SK-N-SH (cell line): ENCODE measurements at regions of chr2 and their contacts with region 1.

Region 1: DNA sequence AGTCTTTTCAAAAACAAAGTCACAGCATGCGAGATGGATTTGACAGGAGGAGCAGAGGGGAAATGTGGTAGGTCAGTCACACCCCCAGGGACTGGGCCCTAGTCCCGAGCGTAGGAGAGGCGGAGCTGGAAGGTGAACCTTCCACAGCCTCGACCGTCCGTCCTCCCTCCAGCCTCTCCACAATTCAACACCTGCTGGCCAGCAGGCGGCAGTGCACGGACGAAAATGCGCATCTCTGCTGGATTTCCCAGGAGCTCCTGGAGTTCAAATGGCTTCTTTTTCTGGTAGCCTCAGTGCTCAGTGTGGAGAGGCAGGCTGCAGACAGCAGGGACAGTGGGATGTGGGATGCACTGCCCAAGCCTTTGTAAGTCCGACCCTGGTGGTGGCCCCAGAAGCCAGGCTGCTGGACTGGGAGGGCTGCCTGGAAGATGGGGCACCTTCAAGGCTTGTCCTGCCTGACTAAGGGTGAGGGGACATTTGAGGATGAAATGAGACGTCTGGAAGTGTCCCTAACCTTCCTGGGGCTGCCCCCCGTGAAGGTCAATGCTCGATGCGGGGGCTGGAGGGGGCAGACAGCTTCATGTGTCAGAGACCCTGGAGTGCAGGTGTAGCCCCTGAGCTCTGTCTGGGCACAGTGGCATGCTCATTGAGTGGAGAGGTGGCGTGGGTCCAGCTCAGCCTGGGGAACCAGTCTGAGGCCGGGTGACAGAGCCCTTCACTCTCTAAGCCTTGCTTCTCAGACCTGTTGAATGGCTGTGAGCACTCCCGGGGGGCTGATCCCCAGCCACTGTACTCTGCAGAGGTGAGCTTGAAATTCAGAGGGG is 189.5 kb downstream of the TFCP2L1 start:
- DNase-seq: peak; percentile 85
- H3K4me3 ChIP-seq: no peak overlapping the region
- H3K27ac ChIP-seq: no peak overlapping the region
- H3K4me1 ChIP-seq: peaks cover 0 to 8% of the 10 kb centered on the region in 2 experiments; a peak in 2 of 4 replicates
- H3K27me3 ChIP-seq: peaks cover 15% of the 10 kb centered on the region
- CTCF ChIP-seq: peak; percentile 67
- EP300 ChIP-seq: no peak
- RAD21 ChIP-seq: peak; percentile 84

Region 2: DNA sequence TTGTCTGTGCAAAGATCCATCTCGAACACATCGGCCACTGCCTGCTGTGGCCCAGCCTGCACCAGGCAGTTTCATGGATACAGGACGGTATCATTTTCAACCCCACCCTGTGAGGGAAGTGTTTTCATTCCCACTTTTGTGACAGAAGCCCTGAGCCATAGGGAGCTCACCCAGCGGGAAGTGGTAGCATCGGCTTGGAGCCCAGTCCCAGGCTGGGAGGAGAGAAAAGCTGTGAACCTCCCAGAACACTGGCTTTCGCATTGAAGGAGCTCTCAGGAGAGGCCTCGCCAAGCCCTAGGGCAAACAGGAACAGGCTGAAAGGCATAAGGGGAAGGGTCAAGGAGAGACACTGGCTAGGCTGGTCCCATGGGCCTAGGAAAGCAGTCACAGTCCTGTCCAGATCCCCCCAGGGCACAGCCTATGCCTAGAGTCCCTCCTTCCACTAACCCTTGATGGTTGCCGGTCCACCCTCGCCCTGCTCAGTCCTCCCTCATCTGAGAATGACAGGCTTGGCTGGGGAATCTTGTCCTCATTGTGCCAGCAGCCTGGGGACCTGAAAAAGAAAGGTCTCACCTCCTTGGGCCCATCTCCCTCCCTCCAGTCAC is 23.6 kb after region 1 on chr2:
- CTCF ChIA-PET with region 1: interaction called, 11 read pairs
- POLR2A ChIA-PET with region 1: no interaction called
- DNase-seq: no peak
- H3K4me3 ChIP-seq: no peak overlapping the region
- H3K27ac ChIP-seq: no peak overlapping the region
- H3K4me1 ChIP-seq: no peaks in the 10 kb centered on the region
- H3K27me3 ChIP-seq: peaks cover 16% of the 10 kb centered on the region
- CTCF ChIP-seq: no peak
- EP300 ChIP-seq: no peak
- RAD21 ChIP-seq: no peak

Region 3: DNA sequence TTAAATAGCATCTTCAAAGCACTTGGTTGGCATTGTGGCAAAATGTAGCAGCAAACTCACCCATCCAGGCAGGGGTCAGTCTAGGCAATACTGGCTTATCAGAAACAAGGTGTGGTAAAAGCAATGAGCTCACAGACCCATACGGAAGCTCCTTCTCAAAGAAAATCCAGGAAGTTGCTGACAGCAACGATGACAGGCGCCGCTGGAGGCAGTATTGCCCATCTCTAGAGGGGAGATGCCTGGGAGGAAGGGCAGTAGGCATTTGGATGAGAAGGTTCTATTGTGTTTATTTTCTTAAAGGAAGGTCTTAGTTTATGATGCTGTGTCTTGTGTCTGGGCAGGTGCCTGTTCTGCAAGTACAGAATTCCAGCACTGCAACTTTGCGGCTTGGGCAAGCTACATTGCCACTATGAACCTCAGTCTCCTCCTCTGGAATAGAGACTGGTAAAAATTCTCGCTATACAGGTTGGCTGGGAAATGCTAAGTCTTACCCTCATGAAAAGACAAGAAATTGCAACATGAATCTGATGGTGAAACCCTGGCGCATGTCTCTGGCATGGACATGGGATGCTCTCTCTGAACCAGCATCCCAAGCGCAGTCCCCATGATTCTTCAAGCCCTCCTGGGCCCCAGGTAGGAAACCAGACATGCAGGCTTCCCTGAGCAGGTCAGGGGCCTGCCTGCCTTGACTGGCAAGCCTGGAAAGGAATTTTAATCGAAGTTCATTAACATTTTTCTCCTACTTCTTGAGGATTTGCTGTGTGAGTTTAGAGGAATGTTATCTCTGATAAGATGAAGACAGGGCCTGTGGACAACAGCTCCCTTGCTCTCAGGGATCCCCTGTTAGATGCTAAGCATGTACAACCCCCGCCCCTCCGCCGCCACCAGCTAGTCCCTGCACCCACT is 33.5 kb after region 1 on chr2:
- CTCF ChIA-PET with region 1: interaction called, 17 read pairs
- POLR2A ChIA-PET with region 1: no interaction called
- DNase-seq: no peak
- H3K4me3 ChIP-seq: no peak overlapping the region
- H3K27ac ChIP-seq: no peak overlapping the region
- H3K4me1 ChIP-seq: peaks cover 0 to 9% of the 10 kb centered on the region in 2 experiments; a peak in 1 of 4 replicates
- H3K27me3 ChIP-seq: peaks cover 15% of the 10 kb centered on the region
- CTCF ChIP-seq: peak; percentile 19
- EP300 ChIP-seq: no peak
- RAD21 ChIP-seq: no peak

Region 4: DNA sequence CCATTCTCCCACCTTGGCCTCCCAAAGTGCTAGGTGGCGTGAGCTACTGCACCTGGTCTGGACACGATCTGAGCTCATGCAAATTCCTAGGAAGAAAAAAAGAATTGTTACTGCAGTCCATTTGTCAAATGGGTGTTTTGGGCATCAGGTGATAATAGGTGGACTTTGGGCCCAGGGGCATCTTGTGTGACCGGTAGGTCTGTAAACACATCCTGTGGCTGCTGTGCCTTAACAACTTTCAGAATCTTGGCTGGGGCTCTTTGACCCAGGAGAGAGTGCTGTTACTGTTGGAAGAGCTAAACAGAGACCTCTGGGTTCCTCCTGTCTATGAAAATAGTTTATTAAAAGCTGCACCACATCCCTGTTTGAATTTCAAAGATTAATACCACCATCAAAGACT is 224.5 kb after region 1 on chr2:
- CTCF ChIA-PET with region 1: interaction called, 17 read pairs
- POLR2A ChIA-PET with region 1: no interaction called
- DNase-seq: no peak
- H3K4me3 ChIP-seq: no peak overlapping the region
- H3K27ac ChIP-seq: no peak overlapping the region
- H3K4me1 ChIP-seq: no peaks in the 10 kb centered on the region
- H3K27me3 ChIP-seq: no peaks in the 10 kb centered on the region
- CTCF ChIP-seq: no peak
- EP300 ChIP-seq: no peak
- RAD21 ChIP-seq: no peak

Region 5: DNA sequence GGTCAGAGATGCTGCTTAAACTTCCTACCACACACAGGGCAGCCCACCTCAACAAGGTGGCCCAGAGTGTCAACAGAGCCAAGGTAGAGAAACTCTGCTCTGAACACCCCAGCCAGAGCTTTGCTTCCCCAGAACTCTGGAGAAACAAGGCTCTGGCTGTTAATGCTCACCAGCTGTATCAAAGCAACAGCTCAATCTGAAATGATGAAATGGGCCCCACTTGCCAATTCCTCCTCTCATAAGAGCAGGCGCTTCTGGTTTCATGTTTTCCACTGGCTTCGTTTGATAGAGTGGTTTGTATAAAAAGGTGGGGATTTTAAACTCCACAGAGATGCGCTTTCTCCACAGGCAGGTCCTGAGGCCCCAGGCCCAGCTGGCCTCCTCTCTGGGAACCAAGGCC is 250.4 kb after region 1 on chr2:
- CTCF ChIA-PET with region 1: interaction called, 10 read pairs
- POLR2A ChIA-PET with region 1: no interaction called
- DNase-seq: no peak
- H3K4me3 ChIP-seq: no peak overlapping the region
- H3K27ac ChIP-seq: no peak overlapping the region
- H3K4me1 ChIP-seq: no peaks in the 10 kb centered on the region
- H3K27me3 ChIP-seq: no peaks in the 10 kb centered on the region
- CTCF ChIP-seq: no peak
- EP300 ChIP-seq: no peak
- RAD21 ChIP-seq: no peak